HCT116 (cell line): ENCODE measurements at regions of chr5 and their contacts with region 1.

Region 1: DNA sequence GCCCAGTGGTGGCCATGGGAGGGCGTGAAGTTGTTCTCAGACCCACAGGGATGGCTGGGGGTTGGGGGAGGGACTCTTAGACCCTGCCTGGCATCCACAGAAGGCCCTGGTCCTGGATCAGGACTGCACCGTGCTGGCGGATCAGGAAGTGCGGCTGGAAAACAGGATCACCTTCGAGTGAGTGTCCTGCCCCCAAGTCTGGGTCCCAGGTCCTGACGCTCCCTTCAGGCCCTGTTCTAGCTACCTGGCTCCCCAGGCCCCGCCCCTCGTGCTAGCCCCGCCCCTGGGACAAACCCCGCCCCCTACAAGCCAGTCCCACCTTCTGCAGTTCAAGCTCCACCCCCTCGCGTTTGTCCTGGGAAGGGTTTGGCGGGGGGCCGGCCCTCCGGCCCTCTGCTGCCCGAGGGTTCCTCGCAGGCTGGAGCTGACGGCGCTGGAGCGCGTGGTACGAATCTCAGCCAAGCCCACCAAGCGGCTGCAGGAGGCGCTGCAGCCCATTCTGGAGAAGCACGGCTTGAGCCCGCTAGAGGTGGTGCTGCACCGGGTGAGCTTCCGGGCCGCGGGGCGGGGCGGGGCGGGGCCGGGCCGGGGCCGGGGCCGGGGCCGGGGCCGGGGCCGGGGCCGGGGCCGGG is 12.9 kb downstream of the RGS14 start:
- DNase-seq: peak; percentile 94
- ATAC-seq: peak; percentile 90
- H3K4me3 ChIP-seq: peak overlapping the region; percentile 74 to 78
- H3K27ac ChIP-seq: peak overlapping the region; percentile 70
- H3K4me1 ChIP-seq: peaks cover 22 to 48% of the 10 kb centered on the region in 2 experiments
- H3K27me3 ChIP-seq: no peaks in the 10 kb centered on the region
- CTCF ChIP-seq: peak in 2 of 3 experiments; percentile 58 to 65; a peak in 4 of 6 replicates
- POLR2A ChIP-seq: no peak
- RAD21 ChIP-seq: no peak

Region 2: GRCh38 chr5:177311723-177312648 is 58.6 kb before region 1 on chr5 and contains the start of gene MXD3:
- CTCF ChIA-PET with region 1: interaction called, 17 read pairs
- POLR2A ChIA-PET with region 1: interaction called, 4 read pairs
- RAD21 ChIA-PET with region 1: no interaction called
- intact Hi-C with region 1: no loop called
- DNase-seq: peak; percentile 91
- ATAC-seq: peak; percentile 77
- H3K4me3 ChIP-seq: peak within 1 kb of the TSS; percentile 82 to 87
- H3K27ac ChIP-seq: peak within 1 kb of the TSS; percentile 82
- H3K4me1 ChIP-seq: peaks cover 18 to 45% of the 10 kb centered on the region in 2 experiments
- H3K27me3 ChIP-seq: no peaks in the 10 kb centered on the region
- CTCF ChIP-seq: no peak
- POLR2A ChIP-seq: no peak
- RAD21 ChIP-seq: no peak
- total RNA-seq, gene MXD3: 37.6 TPM

Region 3: GRCh38 chr5:177357146-177357458 is 13.5 kb before region 1 on chr5:
- CTCF ChIA-PET with region 1: interaction called, 15 read pairs
- POLR2A ChIA-PET with region 1: interaction called, 9 read pairs
- RAD21 ChIA-PET with region 1: no interaction called
- intact Hi-C with region 1: no loop called
- DNase-seq: no peak
- ATAC-seq: no peak
- H3K4me3 ChIP-seq: no peak overlapping the region
- H3K27ac ChIP-seq: no peak overlapping the region
- H3K4me1 ChIP-seq: peaks cover 2 to 11% of the 10 kb centered on the region in 2 experiments; a peak in 2 of 4 replicates
- H3K27me3 ChIP-seq: no peaks in the 10 kb centered on the region
- CTCF ChIP-seq: no peak
- POLR2A ChIP-seq: no peak
- RAD21 ChIP-seq: no peak

Region 4: GRCh38 chr5:177382423-177383029 is 11.9 kb after region 1 on chr5:
- CTCF ChIA-PET with region 1: interaction called, 14 read pairs
- POLR2A ChIA-PET with region 1: interaction called, 3 read pairs
- RAD21 ChIA-PET with region 1: no interaction called
- intact Hi-C with region 1: no loop called
- DNase-seq: no peak
- ATAC-seq: peak; percentile 85
- H3K4me3 ChIP-seq: no peak overlapping the region
- H3K27ac ChIP-seq: no peak overlapping the region
- H3K4me1 ChIP-seq: peaks cover 3 to 17% of the 10 kb centered on the region in 2 experiments; a peak in 3 of 4 replicates
- H3K27me3 ChIP-seq: no peaks in the 10 kb centered on the region
- CTCF ChIP-seq: peak in 2 of 3 experiments; percentile 40 to 51; a peak in 4 of 6 replicates
- POLR2A ChIP-seq: no peak
- RAD21 ChIP-seq: no peak

Region 5: GRCh38 chr5:177403792-177404640 is 33.4 kb after region 1 on chr5:
- CTCF ChIA-PET with region 1: interaction called, 28 read pairs
- POLR2A ChIA-PET with region 1: interaction called, 6 read pairs
- RAD21 ChIA-PET with region 1: interaction called, 3 to 4 read pairs
- intact Hi-C with region 1: loop called (anchors 1 kb)
- DNase-seq: peak; percentile 56
- ATAC-seq: peak; percentile 72
- H3K4me3 ChIP-seq: peak overlapping the region; percentile 69 to 82
- H3K27ac ChIP-seq: peak overlapping the region; percentile 99
- H3K4me1 ChIP-seq: peaks cover 15 to 37% of the 10 kb centered on the region in 2 experiments
- H3K27me3 ChIP-seq: no peaks in the 10 kb centered on the region
- CTCF ChIP-seq: peak in 2 of 3 experiments; percentile 55 to 69; a peak in 4 of 6 replicates
- POLR2A ChIP-seq: no peak
- RAD21 ChIP-seq: no peak